H1 (cell line): ENCODE measurements at regions of chr14 and their contacts with region 1.

Region 1: DNA sequence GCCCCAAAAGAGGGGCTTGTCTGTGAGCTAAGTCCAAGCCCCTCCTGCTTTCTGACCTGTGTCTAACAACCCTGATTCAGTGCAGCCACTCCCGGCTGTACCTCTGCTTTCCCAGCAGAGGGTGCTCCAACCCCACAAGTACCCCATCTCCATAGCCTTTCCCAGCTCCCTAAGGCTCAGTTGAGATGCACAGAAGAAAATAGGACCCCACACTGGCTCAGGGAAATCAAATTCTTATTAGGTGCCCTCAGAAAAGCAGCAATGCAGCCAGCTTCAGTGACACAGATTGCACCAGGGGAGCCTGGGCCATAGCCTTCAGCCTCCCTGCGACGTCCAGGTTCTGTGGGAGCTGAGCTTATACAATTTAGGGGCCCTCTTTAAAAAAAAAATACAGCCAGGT is 49.9 kb downstream of the LRRC74A start:
- DNase-seq: peak; percentile 23 to 76
- H3K4me3 ChIP-seq: no peak overlapping the region
- H3K27ac ChIP-seq: no peak overlapping the region
- H3K4me1 ChIP-seq: peaks cover 0 to 3% (median 0%) of the 10 kb centered on the region in 4 experiments; a peak in 1 of 7 replicates
- H3K27me3 ChIP-seq: no peaks in the 10 kb centered on the region; a peak in 2 of 7 replicates
- CTCF ChIP-seq: peak; percentile 97
- EP300 ChIP-seq: no peak
- POLR2A ChIP-seq: no peak
- RAD21 ChIP-seq: peak; percentile 100

Region 2: GRCh38 chr14:76931631-76932402 is 55.7 kb after region 1 on chr14:
- CTCF ChIA-PET with region 1: interaction called, 12 read pairs
- POLR2A ChIA-PET with region 1: no interaction called
- DNase-seq: no peak
- H3K4me3 ChIP-seq: no peak overlapping the region
- H3K27ac ChIP-seq: no peak overlapping the region
- H3K4me1 ChIP-seq: peaks cover 8 to 31% (median 22%) of the 10 kb centered on the region in 4 experiments
- H3K27me3 ChIP-seq: no peaks in the 10 kb centered on the region
- CTCF ChIP-seq: no peak
- EP300 ChIP-seq: no peak
- POLR2A ChIP-seq: no peak
- RAD21 ChIP-seq: no peak

Region 3: GRCh38 chr14:76977793-76978720 is 102.0 kb after region 1 on chr14:
- CTCF ChIA-PET with region 1: interaction called, 15 read pairs
- POLR2A ChIA-PET with region 1: interaction called, 3 read pairs
- DNase-seq: peak in 1 of 2 experiments; percentile 48
- H3K4me3 ChIP-seq: no peak overlapping the region
- H3K27ac ChIP-seq: no peak overlapping the region
- H3K4me1 ChIP-seq: peaks cover 0 to 10% (median 2%) of the 10 kb centered on the region in 4 experiments; a peak in 4 of 7 replicates
- H3K27me3 ChIP-seq: no peaks in the 10 kb centered on the region
- CTCF ChIP-seq: no peak
- EP300 ChIP-seq: no peak
- POLR2A ChIP-seq: no peak
- RAD21 ChIP-seq: no peak

Region 4: GRCh38 chr14:77040059-77040740 is 164.1 kb after region 1 on chr14:
- CTCF ChIA-PET with region 1: interaction called, 25 read pairs
- POLR2A ChIA-PET with region 1: no interaction called
- DNase-seq: peak in 1 of 2 experiments; percentile 80
- H3K4me3 ChIP-seq: peak overlapping the region; percentile 22 to 58 (median 52); a peak in 7 of 8 replicates
- H3K27ac ChIP-seq: no peak overlapping the region
- H3K4me1 ChIP-seq: peaks cover 33 to 65% (median 41%) of the 10 kb centered on the region in 4 experiments; a peak in 6 of 7 replicates
- H3K27me3 ChIP-seq: peaks cover 0 to 4% (median 2%) of the 10 kb centered on the region in 4 experiments; a peak in 2 of 7 replicates
- CTCF ChIP-seq: no peak
- EP300 ChIP-seq: no peak; a peak in 1 of 3 replicates
- POLR2A ChIP-seq: no peak
- RAD21 ChIP-seq: no peak

Region 5: DNA sequence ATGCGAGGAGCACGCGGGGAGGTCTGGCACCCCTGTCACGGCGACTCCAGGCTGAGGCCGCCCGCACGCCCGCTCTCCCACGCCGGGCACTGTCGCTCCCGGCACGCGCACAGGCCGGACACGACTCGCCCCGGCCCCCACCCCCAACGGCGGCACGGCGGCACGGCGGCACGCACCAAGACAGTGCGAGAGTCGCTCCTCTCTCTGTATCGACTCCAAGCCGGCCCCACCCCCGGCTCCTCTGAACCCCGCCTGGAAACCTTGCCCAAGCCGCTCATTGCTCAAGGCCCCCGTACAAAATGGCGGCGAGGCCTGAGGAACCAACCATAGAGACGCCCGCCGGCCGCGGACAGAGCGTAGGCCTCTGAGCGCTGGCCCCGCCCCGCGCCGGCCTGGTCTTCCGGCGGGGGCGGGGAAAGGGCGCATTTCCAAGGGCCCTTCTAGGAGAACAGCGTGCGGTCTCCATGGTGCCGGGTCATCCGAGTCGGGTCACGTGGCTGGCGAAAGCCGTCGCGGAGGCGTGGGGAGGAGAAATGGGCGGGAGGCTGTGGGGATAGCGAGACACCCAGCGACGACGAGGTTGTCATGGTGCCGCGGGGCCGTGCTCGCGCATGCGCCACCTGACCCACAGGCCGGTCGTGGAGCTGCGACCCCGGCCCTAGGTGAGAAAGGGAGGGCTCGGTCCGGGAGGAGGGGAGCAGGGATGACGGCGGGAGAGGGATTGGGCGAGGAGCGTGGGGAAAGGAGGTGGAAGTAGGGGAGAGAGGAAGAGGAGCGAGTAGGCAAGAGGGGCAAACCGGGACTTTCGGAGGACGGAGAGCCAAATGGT is 221.8 kb after region 1 on chr14 and contains the start of gene CIPC:
- CTCF ChIA-PET with region 1: interaction called, 318 read pairs
- POLR2A ChIA-PET with region 1: interaction called, 4 read pairs
- DNase-seq: peak; percentile 95 to 98
- H3K4me3 ChIP-seq: peak within 1 kb of the TSS; percentile 87 to 96 (median 88)
- H3K27ac ChIP-seq: peak within 1 kb of the TSS; percentile 86
- H3K4me1 ChIP-seq: peaks cover 0 to 8% (median 4%) of the 10 kb centered on the region in 4 experiments; a peak in 4 of 7 replicates
- H3K27me3 ChIP-seq: no peaks in the 10 kb centered on the region
- CTCF ChIP-seq: no peak
- EP300 ChIP-seq: peak in 1 of 2 experiments; percentile 60; a peak in 1 of 3 replicates
- POLR2A ChIP-seq: no peak
- RAD21 ChIP-seq: peak; percentile 13 to 16; a peak in 2 of 4 replicates
- total RNA-seq, gene CIPC: 31.7 and 32.7 TPM in 2 replicates